ENCODE measurements at regions of chr3 and their contacts with region 1.

Region 1: DNA sequence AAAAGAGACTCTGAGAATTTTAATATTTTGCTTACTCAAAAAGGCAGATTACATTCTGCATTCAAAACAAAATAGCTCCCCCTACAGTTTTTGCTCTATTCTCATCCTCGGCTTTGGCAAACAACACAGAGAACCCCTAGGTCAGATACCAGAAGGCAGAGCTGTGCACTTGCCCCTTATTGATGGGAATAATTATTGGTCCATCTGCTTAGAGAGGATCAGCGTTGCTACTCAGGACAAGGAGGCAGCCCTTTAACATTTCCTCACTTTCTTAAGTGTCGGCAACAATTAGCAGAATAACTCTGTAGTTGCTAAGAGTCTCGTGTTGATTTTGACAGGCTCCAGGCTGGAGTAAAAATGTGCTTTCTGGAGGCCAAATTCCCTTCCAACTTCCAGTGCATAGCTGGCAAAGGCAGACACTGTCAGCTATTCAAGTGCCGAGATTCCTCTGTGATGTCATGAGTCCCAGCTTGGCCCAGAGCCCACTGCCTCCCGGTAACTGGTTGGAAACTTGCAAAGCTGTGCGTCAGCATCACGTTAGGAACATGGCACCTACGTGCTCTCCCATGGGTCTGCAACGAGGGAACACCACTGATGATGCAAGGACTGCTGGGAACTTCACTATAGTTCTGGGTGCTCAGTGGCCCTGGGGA is 482.7 kb upstream of the ADAMTS9 start:
- DNase-seq: peak; percentile 83 to 99
- H3K4me3 ChIP-seq: no peak overlapping the region
- H3K27ac ChIP-seq: peak overlapping the region; percentile 46 to 65
- H3K4me1 ChIP-seq: peaks cover 0 to 17% (median 11%) of the 10 kb centered on the region in 4 donors
- H3K27me3 ChIP-seq: no peaks in the 10 kb centered on the region
- CTCF ChIP-seq: peak; percentile 8 to 20

Region 2: DNA sequence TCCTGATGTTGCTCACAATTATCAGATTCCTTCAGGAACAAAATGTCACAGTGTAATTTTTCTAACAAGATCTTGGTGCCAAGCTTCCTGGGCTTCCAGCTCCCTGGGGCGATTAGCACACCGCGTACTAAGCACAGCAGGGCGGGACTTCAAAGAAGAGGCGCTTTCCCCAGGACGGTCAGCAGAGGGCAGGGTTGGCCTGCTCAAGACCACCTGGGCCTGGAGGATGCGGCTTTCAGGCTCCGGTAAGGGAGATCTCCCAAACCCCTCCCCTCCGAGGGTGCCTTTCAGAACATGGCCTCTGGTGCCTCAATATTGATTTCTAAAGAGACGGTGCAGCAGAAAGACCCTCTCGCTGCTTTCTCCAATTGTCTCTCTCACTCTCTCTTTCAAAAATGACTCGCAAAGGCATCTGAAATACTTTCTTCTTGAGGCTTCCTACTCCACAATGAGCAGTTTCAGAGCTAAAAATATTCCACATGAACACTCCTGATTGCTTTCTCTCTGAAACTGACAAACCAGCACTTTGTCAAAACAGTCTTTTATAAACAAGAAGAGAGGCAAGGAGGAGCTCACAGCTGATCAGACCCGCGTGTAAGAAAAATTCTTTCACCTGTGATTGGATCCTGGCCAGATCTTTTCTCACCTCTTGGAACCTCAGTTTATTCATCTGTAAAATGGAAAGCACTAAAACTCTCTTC is 636.7 kb before region 1 on chr3:
- intact Hi-C with region 1: loop called (anchors 10 kb)
- DNase-seq: peak; percentile 87 to 96
- H3K4me3 ChIP-seq: peak overlapping the region in 1 of 2 donors; percentile 24
- H3K27ac ChIP-seq: peak overlapping the region; percentile 20 to 55
- H3K4me1 ChIP-seq: peaks cover 0 to 21% (median 4%) of the 10 kb centered on the region in 4 donors
- H3K27me3 ChIP-seq: no peaks in the 10 kb centered on the region
- CTCF ChIP-seq: peak; percentile 84 to 92

Region 3: GRCh38 chr3:64685800-64686445 is 484.6 kb before region 1 on chr3:
- intact Hi-C with region 1: loop called (anchors 2 kb)
- DNase-seq: peak; percentile 86 to 97
- H3K4me3 ChIP-seq: peak overlapping the region; percentile 79
- H3K27ac ChIP-seq: peak overlapping the region; percentile 94 to 98
- H3K4me1 ChIP-seq: peaks cover 0 to 29% (median 1%) of the 10 kb centered on the region in 4 donors
- H3K27me3 ChIP-seq: no peaks in the 10 kb centered on the region
- CTCF ChIP-seq: no peak

Region 4: GRCh38 chr3:64890006-64890405 is 280.5 kb before region 1 on chr3:
- intact Hi-C with region 1: loop called (anchors 10 kb)
- DNase-seq: peak in 1 of 2 donors; percentile 78
- H3K4me3 ChIP-seq: no peak overlapping the region
- H3K27ac ChIP-seq: peak overlapping the region; percentile 29 to 46
- H3K4me1 ChIP-seq: peaks cover 0 to 43% (median 6%) of the 10 kb centered on the region in 4 donors
- H3K27me3 ChIP-seq: no peaks in the 10 kb centered on the region
- CTCF ChIP-seq: no peak

Region 5: GRCh38 chr3:64924961-64925360 is 245.6 kb before region 1 on chr3:
- intact Hi-C with region 1: no loop called
- DNase-seq: no peak
- H3K4me3 ChIP-seq: no peak overlapping the region
- H3K27ac ChIP-seq: no peak overlapping the region
- H3K4me1 ChIP-seq: peaks cover 0 to 17% (median 7%) of the 10 kb centered on the region in 4 donors
- H3K27me3 ChIP-seq: no peaks in the 10 kb centered on the region
- CTCF ChIP-seq: no peak

Measured in tibial artery (tissue), 4 donors.